ENCODE measurements at regions of chr14 and their contacts with region 1.

Region 1: DNA sequence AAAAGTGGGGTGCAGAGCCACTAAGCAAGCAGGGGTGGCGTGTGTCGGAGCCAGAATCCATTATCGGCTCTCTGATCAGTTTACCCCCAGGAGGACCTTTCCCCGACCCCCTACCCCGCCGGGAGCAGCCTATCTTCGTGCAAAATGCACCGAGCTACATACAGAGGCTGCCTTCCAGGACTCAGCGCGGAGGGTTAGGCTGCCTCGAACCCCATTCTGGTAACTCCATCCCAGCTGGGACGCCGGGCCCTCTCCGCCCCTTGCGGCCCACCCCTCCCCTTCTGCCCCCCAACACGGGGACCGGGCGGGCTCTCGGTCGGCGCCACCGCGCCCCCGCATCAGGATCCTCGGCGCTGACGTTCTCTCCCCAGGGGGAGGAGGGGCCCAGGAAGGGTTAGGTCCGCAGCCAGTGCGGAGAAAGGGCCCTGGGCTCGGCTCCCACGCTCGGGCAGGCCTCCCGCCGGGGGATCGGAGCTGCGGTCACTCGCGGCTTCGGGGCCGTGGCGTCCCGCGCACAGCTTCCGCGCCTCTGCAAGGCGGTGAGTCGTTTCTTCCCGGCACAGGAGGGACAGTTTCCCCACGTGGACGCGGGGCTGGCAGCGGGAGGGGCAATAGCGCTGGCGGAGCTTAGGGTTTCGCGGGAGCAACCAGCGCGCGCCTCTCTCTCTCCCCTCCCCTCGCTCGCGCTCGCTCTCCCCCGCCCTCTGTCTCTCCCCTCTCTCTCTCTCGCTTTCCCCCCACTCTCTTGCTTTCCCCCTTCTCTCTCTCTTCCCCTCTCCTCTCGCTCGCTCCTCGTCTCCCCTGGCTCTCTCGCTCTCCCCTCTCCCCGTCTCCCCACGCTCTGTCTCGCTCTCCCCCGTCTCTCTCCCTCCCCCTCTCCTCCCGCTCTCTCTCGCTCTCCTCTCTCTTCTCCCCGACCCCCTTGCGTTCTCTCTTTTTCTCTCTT is 12.5 kb upstream of the MAP3K9 start:
- DNase-seq: peak; percentile 79
- CTCF ChIP-seq: no peak

Region 2: GRCh38 chr14:70771781-70772212 is 50.1 kb before region 1 on chr14:
- in situ Hi-C with region 1: no loop called
- DNase-seq: no peak
- CTCF ChIP-seq: no peak

Region 3: GRCh38 chr14:70962935-70963334 is 141.1 kb after region 1 on chr14:
- in situ Hi-C with region 1: loop called (anchors 5 kb)
- DNase-seq: no peak
- CTCF ChIP-seq: no peak

Region 4: DNA sequence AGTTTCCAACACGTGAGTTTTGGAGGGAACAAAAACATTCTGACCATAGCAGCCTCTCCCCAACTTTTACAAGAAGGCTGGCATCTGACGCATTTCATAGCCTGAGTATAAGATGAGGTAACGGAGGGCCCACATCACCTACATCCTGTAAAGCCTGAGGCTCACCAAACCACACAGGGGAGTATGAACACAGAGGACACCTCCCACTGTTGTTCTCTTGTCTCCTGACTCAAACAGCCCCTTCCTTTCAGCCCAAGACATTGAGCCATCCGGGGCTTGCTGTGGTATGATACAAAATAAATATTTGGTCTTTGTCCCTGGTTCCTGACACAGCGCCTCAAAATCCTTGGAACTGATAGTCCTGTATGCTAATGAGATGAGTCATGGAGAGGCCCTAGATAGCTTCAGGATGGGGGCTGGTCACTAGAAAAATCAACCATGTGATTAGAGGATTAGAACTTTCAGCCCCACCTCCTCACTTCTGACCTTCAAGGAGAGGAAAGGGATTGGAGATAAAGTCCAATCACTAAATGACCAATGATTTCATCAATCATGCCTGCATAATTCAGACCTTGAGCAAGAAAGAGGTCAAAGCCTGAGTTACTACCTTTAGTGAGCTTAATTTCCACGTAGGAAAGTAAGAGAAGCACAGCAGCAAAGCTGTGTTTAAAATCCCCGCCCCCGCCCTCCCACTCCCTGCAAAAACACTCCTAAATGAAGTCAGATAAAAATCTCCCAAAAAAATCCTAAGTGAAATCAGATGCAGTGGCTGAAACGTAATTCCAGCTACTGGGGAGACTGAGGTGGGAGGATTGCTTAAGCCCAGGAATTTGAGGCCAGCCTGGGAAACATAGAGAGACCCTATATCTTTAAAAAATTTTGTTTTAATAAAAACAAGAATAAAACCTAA is 321.8 kb after region 1 on chr14:
- in situ Hi-C with region 1: no loop called
- DNase-seq: no peak
- CTCF ChIP-seq: no peak

Measured in GM13976 (cell line).